HepG2 (cell line): ENCODE measurements at regions of chr1 and their contacts with region 1.

Region 1: DNA sequence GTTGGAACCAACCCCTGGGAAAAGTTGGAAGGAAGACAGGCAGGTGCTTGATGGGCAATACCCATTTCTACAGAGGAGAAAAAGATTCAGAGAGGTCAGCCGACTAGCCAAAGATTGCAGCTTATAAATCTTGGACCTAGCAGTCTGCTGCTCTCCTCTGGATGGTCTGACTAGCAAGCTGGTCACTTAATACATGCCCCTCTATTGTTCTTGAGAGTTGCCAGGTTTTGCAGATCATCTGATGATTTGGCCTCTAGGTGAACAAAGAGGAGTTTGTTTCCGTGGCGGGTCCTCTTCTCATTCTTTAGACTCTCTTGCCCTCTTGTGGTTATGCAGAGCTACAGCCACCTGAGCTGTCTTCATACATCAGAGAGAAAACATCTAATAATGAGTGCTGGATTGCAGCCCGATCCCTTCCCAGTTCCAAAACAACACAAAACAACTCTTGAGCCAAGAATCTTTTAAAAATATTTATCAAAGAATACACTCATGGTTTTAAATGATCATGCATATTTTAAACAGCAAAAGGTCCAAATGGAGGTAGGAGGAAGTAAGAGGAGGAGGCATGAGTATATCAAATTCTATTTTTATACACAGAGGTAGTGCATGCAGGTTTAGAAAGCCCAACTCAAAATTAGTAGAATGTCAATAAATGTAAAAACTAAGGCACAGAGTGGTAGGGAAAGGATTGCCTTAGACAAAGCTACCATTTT is 115.7 kb downstream of the SLC30A10 start:
- DNase-seq: peak; percentile 85
- ATAC-seq: peak; percentile 99
- H3K4me3 ChIP-seq: no peak overlapping the region
- H3K27ac ChIP-seq: no peak overlapping the region
- H3K4me1 ChIP-seq: peaks cover 5% of the 10 kb centered on the region; the same call in 1 of the 2 replicates
- H3K27me3 ChIP-seq: peaks cover 1 to 4% of the 10 kb centered on the region in 2 experiments; a peak in 2 of 5 replicates
- CTCF ChIP-seq: peak; percentile 86
- EP300 ChIP-seq: no peak
- POLR2A ChIP-seq: no peak
- RAD21 ChIP-seq: peak; percentile 71; the same call in 1 of the 2 replicates

Region 2: GRCh38 chr1:218330043-218330623 is 1482.5 kb before region 1 on chr1:
- CTCF ChIA-PET with region 1: interaction called, 8 read pairs
- POLR2A ChIA-PET with region 1: no interaction called
- in situ Hi-C with region 1: no loop called
- intact Hi-C with region 1: loop called (anchors 1 kb)
- DNase-seq: peak; percentile 16
- ATAC-seq: no peak; the same call in 2 of the 3 replicates
- H3K4me3 ChIP-seq: no peak overlapping the region
- H3K27ac ChIP-seq: no peak overlapping the region
- H3K4me1 ChIP-seq: no peaks in the 10 kb centered on the region
- H3K27me3 ChIP-seq: no peaks in the 10 kb centered on the region; a peak in 1 of 5 replicates
- CTCF ChIP-seq: peak; percentile 56
- EP300 ChIP-seq: no peak
- POLR2A ChIP-seq: no peak
- RAD21 ChIP-seq: no peak; the same call in 1 of the 2 replicates

Region 3: GRCh38 chr1:218345673-218346390 is 1466.8 kb before region 1 on chr1:
- CTCF ChIA-PET with region 1: no interaction called
- POLR2A ChIA-PET with region 1: no interaction called
- in situ Hi-C with region 1: loop called (anchors 10 kb)
- intact Hi-C with region 1: no loop called
- DNase-seq: peak; percentile 7
- ATAC-seq: peak; percentile 95
- H3K4me3 ChIP-seq: peak overlapping the region; percentile 56 to 78 (median 56)
- H3K27ac ChIP-seq: no peak overlapping the region
- H3K4me1 ChIP-seq: peaks cover 29% of the 10 kb centered on the region
- H3K27me3 ChIP-seq: peaks cover 2 to 41% of the 10 kb centered on the region in 2 experiments; a peak in 3 of 5 replicates
- CTCF ChIP-seq: 0 out of 2 replicates have a peak, but pooled peaks have one; percentile 11
- EP300 ChIP-seq: no peak
- POLR2A ChIP-seq: no peak
- RAD21 ChIP-seq: no peak

Region 4: GRCh38 chr1:219317762-219318353 is 494.8 kb before region 1 on chr1:
- CTCF ChIA-PET with region 1: no interaction called
- POLR2A ChIA-PET with region 1: no interaction called
- in situ Hi-C with region 1: no loop called
- intact Hi-C with region 1: loop called (anchors 1 kb)
- DNase-seq: peak; percentile 83
- ATAC-seq: peak; percentile 100
- H3K4me3 ChIP-seq: no peak overlapping the region
- H3K27ac ChIP-seq: peak overlapping the region; percentile 21
- H3K4me1 ChIP-seq: peaks cover 39% of the 10 kb centered on the region
- H3K27me3 ChIP-seq: no peaks in the 10 kb centered on the region
- CTCF ChIP-seq: peak; percentile 93
- EP300 ChIP-seq: 0 out of 4 replicates have a peak, but pooled peaks of 1 of the 2 experiments have one; percentile 25
- POLR2A ChIP-seq: no peak
- RAD21 ChIP-seq: peak; percentile 89

Region 5: DNA sequence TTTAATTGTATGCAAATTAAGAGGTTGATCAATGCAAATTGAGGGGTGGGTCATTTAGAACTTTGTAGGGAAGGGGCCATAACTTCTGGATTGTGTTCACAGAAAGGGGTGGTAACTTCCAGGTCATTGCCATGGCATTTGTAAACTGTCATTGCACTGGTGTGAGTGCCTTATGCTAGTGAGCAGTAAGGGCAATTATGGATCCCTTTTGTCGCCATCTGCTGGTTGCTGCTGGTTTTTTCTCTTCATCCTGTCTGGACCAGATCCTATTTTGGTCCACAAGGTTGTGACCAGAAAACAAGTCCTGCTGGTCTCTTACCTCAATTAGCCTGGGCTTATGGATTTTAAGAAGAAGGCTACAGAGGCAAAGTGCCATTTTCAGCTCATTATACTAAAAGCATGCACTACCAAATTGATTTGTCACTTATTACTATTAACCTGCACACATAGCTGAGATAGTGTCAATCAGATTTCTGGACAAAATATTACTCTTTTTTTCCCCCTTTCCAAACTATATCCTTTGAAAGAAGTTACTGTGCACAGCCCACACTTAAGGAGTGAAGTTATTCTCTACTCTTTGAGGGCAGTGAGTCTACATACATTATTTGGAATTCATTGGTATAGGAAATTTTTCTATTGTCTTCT is 395.9 kb before region 1 on chr1:
- CTCF ChIA-PET with region 1: no interaction called
- POLR2A ChIA-PET with region 1: no interaction called
- in situ Hi-C with region 1: no loop called
- intact Hi-C with region 1: loop called (anchors 1 kb)
- DNase-seq: peak; percentile 47
- ATAC-seq: peak; percentile 93
- H3K4me3 ChIP-seq: no peak overlapping the region
- H3K27ac ChIP-seq: no peak overlapping the region
- H3K4me1 ChIP-seq: peaks cover 40% of the 10 kb centered on the region
- H3K27me3 ChIP-seq: no peaks in the 10 kb centered on the region
- CTCF ChIP-seq: peak; percentile 69
- EP300 ChIP-seq: no peak
- POLR2A ChIP-seq: no peak
- RAD21 ChIP-seq: peak; percentile 32; the same call in 1 of the 2 replicates

Region 6: DNA sequence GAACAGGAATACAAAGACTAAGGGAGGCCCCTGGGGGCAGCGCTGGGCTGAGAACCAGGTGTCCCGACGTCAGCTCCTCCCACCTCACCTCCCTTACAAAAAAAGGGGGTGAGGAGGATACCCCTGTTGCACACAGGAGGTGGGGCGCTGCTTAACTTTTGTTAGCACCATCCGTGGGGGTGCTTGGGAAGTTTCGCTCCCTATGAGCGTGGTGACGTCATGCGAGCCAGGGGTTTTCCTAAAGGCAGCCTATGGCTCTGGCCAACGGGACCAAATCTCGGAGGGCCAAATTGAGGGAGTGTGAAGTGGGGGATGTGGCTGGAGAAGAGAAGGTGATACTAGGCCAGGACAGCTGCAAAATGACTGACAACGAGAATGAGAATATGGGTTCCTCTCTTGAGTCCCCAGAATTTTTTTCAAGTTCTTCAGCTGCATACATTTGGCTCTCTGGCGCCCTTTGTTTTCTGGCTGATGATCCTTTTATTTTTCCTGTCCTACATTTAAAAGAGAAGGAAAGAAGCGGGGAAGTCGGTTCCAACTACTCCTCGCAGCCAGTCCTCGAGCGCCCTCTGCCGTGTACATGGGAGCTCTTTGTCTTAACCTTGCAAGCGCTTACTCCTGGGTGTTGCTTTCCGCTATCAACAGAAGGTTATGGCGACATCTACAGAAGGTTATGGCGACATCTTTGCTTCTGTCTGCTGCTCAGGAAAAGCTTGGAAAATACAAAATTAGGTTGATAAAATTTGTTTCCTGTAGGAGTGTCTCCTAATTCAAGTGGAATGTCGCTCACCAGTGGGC is 151.8 kb before region 1 on chr1:
- CTCF ChIA-PET with region 1: no interaction called
- POLR2A ChIA-PET with region 1: no interaction called
- in situ Hi-C with region 1: no loop called
- intact Hi-C with region 1: loop called (anchors 10 kb)
- DNase-seq: no peak
- ATAC-seq: no peak; the same call in 2 of the 3 replicates
- H3K4me3 ChIP-seq: no peak overlapping the region
- H3K27ac ChIP-seq: no peak overlapping the region
- H3K4me1 ChIP-seq: peaks cover 21% of the 10 kb centered on the region
- H3K27me3 ChIP-seq: no peaks in the 10 kb centered on the region
- CTCF ChIP-seq: peak; percentile 52
- EP300 ChIP-seq: no peak
- POLR2A ChIP-seq: no peak
- RAD21 ChIP-seq: no peak